Posterior vena cava (tissue), 2 donors: ENCODE measurements at regions of chr10 and their contacts with region 1.

Region 1: DNA sequence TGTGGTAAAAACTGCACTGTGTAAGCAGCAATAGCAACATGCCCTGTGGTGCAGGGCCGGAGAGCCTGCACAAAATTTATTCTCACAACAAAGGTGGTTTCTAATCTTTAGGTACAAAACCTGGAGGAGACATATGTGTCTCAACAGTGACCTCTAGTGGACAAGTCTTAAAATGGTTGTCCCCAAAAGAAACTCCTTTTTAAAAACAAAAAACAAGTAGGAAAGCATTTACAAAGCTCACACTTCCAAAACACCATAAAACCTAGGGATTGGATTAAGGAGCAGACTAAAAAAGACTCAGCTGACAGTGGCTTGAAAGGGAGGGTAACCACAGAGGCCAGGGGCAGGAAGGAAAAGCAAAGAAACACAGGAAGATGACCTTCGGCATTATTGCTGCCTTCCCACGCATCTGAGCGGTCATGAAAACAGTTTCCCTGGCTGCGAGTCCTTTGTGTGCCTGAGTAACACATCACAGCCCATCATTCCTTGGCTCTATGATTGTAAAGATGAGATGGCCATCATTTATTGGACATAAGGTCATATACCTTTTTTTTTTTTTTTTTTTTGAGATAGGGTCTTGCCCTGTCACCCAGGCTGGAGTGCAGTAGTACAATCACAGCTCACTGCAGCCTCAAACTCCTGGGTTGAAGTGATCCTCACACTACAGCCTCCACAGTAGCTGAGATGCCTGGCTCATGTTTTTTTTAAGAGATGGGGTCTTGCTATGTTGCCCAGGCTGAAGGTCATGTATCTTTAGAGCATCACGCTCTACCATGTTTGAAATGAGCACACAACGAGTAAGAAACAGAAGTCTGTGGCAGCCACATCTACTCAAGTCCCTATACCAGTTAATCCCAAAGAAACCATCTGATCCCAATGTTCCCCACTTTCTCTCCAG is 39.5 kb downstream of the RSU1 start:
- DNase-seq: no peak

Region 2: DNA sequence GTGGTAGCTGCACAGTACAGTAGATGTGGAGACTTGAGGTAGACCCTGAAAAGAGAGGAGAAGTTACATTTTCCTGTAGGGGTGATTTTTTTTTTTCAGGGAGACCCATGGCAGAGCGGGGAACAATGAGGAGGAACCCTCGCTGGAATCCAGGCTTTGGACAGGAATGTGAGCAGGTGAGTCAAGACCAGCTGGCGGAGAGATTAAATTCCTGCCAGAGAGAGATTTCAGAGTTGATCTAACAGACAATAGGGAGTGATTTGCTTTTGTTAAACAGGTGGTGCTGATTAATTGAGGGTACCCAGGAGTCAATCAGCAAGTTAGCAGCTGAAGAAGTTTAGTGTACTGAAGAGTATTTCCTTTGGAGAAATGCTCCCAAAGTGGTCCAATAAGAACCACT is 875.8 kb before region 1 on chr10:
- intact Hi-C with region 1: loop called in 1 of 2 experiments (anchors 10 kb)
- DNase-seq: no peak

Region 3: DNA sequence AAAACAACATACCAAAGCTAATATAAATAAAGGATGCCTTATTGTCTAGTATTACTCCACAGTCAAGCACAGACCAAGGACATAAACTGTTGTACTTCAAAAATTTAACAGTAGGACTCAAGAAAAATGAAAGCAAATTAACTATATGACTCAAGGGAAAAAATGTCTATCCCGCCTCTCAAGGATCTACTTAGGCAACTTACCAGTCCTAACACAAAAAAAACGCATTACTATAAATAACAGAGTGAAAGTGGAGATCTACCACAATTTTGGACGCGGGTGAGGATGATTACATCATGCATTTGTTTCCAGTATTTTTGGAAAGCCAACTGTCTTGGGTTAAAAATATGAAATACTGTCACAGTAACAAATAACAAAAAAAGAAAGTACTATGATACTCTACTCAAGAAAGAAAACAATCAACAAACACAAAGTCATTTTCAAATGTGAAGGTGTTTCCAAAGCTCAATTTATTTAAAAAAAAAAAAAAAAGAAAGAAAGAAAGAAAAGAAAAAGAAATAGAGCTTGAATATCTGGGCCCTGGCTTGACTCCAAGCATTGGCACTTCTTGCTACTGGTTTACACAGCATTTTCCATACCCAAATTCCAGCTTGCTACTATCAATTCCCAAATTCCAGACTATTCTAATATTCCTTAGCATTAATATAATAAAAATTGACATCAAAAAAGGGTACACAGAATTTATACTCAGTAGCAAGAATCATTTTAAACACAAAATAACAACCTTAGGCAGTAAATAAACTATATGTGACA is 59.9 kb before region 1 on chr10:
- intact Hi-C with region 1: no loop called
- DNase-seq: no peak

Region 4: DNA sequence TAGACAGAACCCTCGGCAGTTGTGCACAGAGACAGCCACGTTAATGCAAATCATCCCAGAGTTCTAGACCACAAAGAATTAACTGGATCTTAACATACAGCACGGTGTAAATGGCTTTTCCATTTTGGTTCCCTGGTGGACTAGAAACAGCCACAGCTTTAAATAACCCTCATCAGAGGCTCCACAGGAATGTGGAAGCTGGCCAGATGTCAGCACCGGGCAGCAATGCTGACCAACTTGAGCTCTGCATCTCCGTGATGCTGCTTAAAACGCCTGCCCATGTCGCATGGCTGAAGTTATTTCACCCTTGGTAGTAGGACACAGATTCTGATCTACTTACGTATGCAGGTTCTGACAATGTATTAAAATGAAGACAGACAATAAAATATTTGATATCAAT is 15.0 kb after region 1 on chr10:
- intact Hi-C with region 1: no loop called
- DNase-seq: no peak